Activated CD4-positive, alpha-beta memory T cell treated with anti-CD3 and anti-CD28 coated beads, Interleukin-2, amount 10 ng/mL, durations not matched to agents 7 days and 5 days (primary cell): ENCODE measurements at regions of chr3 and their contacts with region 1.

Region 1: GRCh38 chr3:185558395-185558794 is 6.0 kb upstream of the LIPH start:
- DNase-seq: no peak
- H3K4me3 Mint-ChIP-seq: no peak overlapping the region
- H3K27ac Mint-ChIP-seq: no peak overlapping the region
- H3K4me1 Mint-ChIP-seq: peaks cover 12% of the 10 kb centered on the region
- H3K27me3 Mint-ChIP-seq: peaks cover 6% of the 10 kb centered on the region

Region 2: GRCh38 chr3:185353823-185354614 is 204.4 kb before region 1 on chr3:
- CTCF ChIA-PET with region 1: interaction called, 11 read pairs
- POLR2A ChIA-PET with region 1: no interaction called
- DNase-seq: peak; percentile 79
- H3K4me3 Mint-ChIP-seq: no peak overlapping the region
- H3K27ac Mint-ChIP-seq: no peak overlapping the region
- H3K4me1 Mint-ChIP-seq: no peaks in the 10 kb centered on the region
- H3K27me3 Mint-ChIP-seq: peaks cover 22% of the 10 kb centered on the region

Region 3: GRCh38 chr3:185439745-185440466 is 118.5 kb before region 1 on chr3:
- CTCF ChIA-PET with region 1: no interaction called
- POLR2A ChIA-PET with region 1: no interaction called
- DNase-seq: no peak
- H3K4me3 Mint-ChIP-seq: no peak overlapping the region
- H3K27ac Mint-ChIP-seq: no peak overlapping the region
- H3K4me1 Mint-ChIP-seq: no peaks in the 10 kb centered on the region
- H3K27me3 Mint-ChIP-seq: peaks cover 12% of the 10 kb centered on the region

Region 4: GRCh38 chr3:185460719-185461350 is 97.6 kb before region 1 on chr3:
- CTCF ChIA-PET with region 1: interaction called, 16 read pairs
- POLR2A ChIA-PET with region 1: no interaction called
- DNase-seq: no peak
- H3K4me3 Mint-ChIP-seq: no peak overlapping the region
- H3K27ac Mint-ChIP-seq: no peak overlapping the region
- H3K4me1 Mint-ChIP-seq: no peaks in the 10 kb centered on the region
- H3K27me3 Mint-ChIP-seq: no peaks in the 10 kb centered on the region

Region 5: GRCh38 chr3:185534511-185534910 is 23.9 kb before region 1 on chr3:
- CTCF ChIA-PET with region 1: interaction called, 11 read pairs
- POLR2A ChIA-PET with region 1: no interaction called
- DNase-seq: no peak
- H3K4me3 Mint-ChIP-seq: no peak overlapping the region
- H3K27ac Mint-ChIP-seq: no peak overlapping the region
- H3K4me1 Mint-ChIP-seq: peaks cover 15% of the 10 kb centered on the region
- H3K27me3 Mint-ChIP-seq: no peaks in the 10 kb centered on the region

Region 6: DNA sequence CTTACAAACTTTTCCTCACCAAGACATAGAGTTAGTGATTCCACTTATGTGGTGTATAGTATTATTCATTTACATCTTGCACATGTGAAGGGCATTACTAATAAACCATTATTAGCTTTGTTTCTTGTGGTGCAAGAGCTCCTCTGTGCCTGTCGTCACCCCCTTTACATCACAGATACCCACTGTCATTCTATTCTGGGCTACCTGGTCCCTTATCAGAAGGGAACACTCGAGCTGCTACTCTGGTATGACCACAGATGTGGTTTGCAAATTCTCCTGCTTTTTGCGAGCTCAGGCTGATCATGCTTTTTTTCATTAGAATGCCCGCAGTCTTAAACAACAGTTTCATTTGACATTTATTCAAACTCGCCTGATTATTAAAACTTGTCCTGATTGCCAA is 13.8 kb after region 1 on chr3:
- CTCF ChIA-PET with region 1: interaction called, 11 read pairs
- POLR2A ChIA-PET with region 1: no interaction called
- DNase-seq: no peak
- H3K4me3 Mint-ChIP-seq: no peak overlapping the region
- H3K27ac Mint-ChIP-seq: no peak overlapping the region
- H3K4me1 Mint-ChIP-seq: peaks cover 6% of the 10 kb centered on the region
- H3K27me3 Mint-ChIP-seq: peaks cover 3% of the 10 kb centered on the region

Region 7: DNA sequence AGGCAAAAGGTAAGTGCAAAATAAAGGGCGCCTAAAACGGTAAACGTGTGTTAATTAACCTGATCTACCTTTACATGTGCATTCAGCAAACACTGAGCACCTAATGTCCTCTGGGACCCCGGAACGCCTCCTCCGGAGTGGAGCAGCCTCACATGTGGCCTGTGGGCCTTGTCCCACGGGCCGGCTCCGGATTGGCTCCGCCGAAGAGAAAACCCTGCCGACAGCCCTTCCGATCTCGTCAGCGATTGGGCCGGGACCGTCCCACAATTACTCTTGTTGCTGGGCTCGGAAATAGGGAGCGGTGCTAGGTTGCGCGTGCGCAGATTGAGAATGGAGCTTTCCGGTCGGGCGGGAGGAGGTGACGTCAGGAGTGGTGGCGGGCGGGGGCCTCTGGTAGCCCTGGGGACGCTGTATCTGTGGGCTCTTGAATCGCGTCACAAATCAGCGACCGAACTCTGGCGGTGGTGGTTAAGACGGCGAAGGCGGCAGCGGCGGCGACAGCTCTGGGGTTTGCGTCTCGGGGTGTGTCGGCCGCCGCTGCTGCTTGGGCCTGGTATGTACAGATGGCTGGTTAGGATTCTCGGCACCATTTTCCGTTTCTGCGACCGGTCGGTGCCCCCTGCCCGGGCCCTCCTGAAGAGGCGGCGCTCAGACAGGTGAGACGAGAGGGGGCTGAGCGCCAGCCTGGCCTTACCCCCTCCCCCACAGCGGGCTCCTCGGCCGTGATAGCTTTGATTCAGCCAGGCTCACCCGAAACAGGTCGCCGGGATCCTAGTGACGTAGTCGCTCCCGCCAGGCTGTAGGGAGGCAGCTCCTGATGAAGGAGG is 27.7 kb after region 1 on chr3 and contains the start of gene SENP2:
- CTCF ChIA-PET with region 1: interaction called, 13 read pairs
- POLR2A ChIA-PET with region 1: interaction called, 3 read pairs
- DNase-seq: peak; percentile 100
- H3K4me3 Mint-ChIP-seq: peak within 1 kb of the TSS; percentile 78
- H3K27ac Mint-ChIP-seq: peak within 1 kb of the TSS; percentile 82
- H3K4me1 Mint-ChIP-seq: peaks cover 36% of the 10 kb centered on the region
- H3K27me3 Mint-ChIP-seq: no peaks in the 10 kb centered on the region
- total RNA-seq, gene SENP2: 32.8 to 33.6 TPM

Region 8: GRCh38 chr3:185645596-185646381 is 87.4 kb after region 1 on chr3:
- CTCF ChIA-PET with region 1: no interaction called
- POLR2A ChIA-PET with region 1: no interaction called
- DNase-seq: no peak
- H3K4me3 Mint-ChIP-seq: no peak overlapping the region
- H3K27ac Mint-ChIP-seq: no peak overlapping the region
- H3K4me1 Mint-ChIP-seq: no peaks in the 10 kb centered on the region
- H3K27me3 Mint-ChIP-seq: peaks cover 7% of the 10 kb centered on the region